ENCODE measurements at regions of chr7 and their contacts with region 1.

Region 1: DNA sequence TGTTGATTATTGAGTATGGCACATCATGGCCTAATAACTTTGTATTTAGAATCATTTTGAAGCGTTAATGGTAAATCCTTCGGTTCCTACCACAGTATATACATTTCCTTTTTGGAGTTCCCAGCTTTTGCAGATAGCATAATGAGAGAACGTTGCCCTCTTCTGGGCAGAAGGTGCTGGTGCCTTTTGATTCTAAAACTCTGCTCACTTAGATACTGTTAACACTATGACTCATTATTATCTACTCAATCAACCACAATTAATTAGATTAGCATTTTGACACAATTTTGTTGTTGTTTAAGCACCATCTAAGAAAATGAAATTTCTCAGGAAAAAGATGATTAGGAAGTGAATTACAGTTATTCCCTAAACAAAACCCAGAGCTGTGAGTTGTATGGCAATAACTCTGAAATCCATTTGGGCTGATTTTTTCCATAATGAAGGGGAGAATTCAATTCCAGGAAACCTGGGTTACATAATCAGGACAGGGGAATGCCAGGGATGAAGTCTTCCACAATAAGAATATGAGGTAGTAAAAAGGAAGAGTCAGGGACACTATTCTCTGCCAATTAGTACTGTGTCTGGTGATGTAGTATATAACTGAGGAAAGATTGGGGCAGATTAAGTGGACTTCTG is 11.5 kb upstream of the DLD start:
- DNase-seq: no peak
- H3K4me3 ChIP-seq: no peak overlapping the region
- H3K27ac ChIP-seq: no peak overlapping the region
- H3K27me3 ChIP-seq: no peaks in the 10 kb centered on the region
- CTCF ChIP-seq: peak; percentile 81

Region 2: GRCh38 chr7:107743567-107744344 is 135.8 kb before region 1 on chr7 and contains the start of gene CBLL1:
- CTCF ChIA-PET with region 1: interaction called, 117 read pairs
- POLR2A ChIA-PET with region 1: interaction called, 6 read pairs
- DNase-seq: peak; percentile 87
- H3K4me3 ChIP-seq: peak within 1 kb of the TSS; percentile 94
- H3K27ac ChIP-seq: peak within 1 kb of the TSS; percentile 99
- H3K27me3 ChIP-seq: no peaks in the 10 kb centered on the region
- CTCF ChIP-seq: peak; percentile 81
- polyA plus RNA-seq, gene CBLL1: 17.0 and 18.0 TPM in 2 replicates

Region 3: DNA sequence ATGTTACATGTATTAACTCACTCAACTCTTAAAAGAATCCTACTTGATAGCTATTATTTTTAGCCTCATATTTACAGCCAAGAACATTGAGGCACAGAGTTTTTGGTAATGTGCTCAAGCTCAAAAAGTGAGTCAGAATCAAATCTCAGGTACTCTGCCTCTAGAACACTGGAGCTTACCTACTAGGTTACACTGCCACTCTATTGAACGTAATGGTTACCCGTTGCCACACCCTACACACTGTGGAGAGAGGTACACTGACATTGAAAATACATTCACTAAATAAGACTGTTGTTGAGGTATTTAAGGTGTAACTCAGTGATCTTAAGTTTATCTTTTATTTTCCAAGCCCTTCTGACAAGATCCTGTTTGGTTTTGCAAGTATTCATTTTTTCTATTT is 94.3 kb before region 1 on chr7:
- CTCF ChIA-PET with region 1: interaction called, 12 read pairs
- POLR2A ChIA-PET with region 1: no interaction called
- DNase-seq: no peak
- H3K4me3 ChIP-seq: no peak overlapping the region
- H3K27ac ChIP-seq: no peak overlapping the region
- H3K27me3 ChIP-seq: peaks cover 14% of the 10 kb centered on the region
- CTCF ChIP-seq: no peak

Region 4: GRCh38 chr7:107890962-107891635 is 11.6 kb after region 1 on chr7 and contains the start of gene DLD:
- CTCF ChIA-PET with region 1: interaction called, 25 read pairs
- POLR2A ChIA-PET with region 1: no interaction called
- DNase-seq: peak; percentile 61
- H3K4me3 ChIP-seq: peak within 1 kb of the TSS; percentile 90
- H3K27ac ChIP-seq: peak within 1 kb of the TSS; percentile 80
- H3K27me3 ChIP-seq: peaks cover 2% of the 10 kb centered on the region
- CTCF ChIP-seq: no peak
- polyA plus RNA-seq, gene DLD: 134 and 169 TPM in 2 replicates